ENCODE measurements at regions of chr2 and their contacts with region 1.

Region 1: GRCh38 chr2:204145263-204145751 is 208.7 kb downstream of the ICOS start:
- DNase-seq: peak; percentile 50 to 82 (median 76)
- ATAC-seq: peak; percentile 98
- H3K4me3 ChIP-seq: peak overlapping the region; percentile 61
- H3K4me3 Mint-ChIP-seq: peak overlapping the region; percentile 82 to 92 (median 86)
- H3K27ac ChIP-seq: peak overlapping the region; percentile 29
- H3K27ac Mint-ChIP-seq: peak overlapping the region; percentile 22 to 83 (median 56)
- H3K4me1 ChIP-seq: peaks cover 0 to 4% of the 10 kb centered on the region in 2 donors
- H3K4me1 Mint-ChIP-seq: peaks cover 3 to 11% (median 10%) of the 10 kb centered on the region in 7 donors
- H3K27me3 ChIP-seq: no peaks in the 10 kb centered on the region
- H3K27me3 Mint-ChIP-seq: peaks cover 0 to 43% (median 15%) of the 10 kb centered on the region in 5 donors

Region 2: DNA sequence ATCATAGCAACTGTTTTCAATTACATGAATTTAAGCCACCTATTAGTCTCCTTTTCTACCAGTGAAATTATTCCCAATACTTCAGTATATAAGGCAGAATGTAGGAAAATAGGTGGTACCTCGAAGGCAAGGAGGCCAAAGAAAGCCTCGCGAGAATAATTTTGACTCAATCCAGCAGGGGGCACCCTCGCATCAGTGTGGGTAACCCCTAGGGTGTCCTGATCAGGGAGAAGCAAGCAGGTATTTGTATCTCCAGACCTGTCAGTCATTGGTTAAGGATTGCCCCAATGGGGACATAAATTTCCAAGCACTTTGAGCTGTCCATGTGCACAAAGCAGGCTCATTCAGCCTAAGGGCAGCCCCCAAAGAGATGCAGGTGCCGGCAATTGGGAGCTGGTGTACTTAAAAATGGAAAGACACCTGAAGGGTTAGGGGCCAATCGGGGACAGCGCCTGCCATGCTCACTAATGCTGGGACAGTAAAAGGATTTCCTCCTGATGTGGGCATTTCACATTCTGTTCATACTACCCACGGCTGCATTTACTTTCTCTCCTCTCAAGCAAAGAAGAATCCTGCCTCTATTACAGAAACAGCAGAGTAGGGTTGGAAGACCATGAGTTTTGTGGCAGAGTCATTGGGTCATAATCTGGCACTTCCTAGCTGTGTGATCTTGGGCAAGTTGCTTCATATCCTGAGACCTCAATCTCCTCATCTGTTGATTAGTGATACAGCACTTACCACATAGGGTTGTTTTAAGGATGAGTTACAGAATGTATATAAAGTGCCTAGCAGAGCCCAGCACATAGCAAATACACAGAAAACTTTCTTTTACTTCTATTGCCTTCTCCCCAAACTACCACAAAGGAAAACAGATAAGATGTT is 72.6 kb before region 1 on chr2:
- CTCF ChIA-PET with region 1: no interaction called
- POLR2A ChIA-PET with region 1: no interaction called
- intact Hi-C with region 1: loop called in 1 of 2 experiments (anchors 2 kb)
- DNase-seq: peak; percentile 9 to 75 (median 44)
- ATAC-seq: peak; percentile 71
- H3K4me3 ChIP-seq: no peak overlapping the region
- H3K4me3 Mint-ChIP-seq: no peak overlapping the region
- H3K27ac ChIP-seq: no peak overlapping the region
- H3K27ac Mint-ChIP-seq: no peak overlapping the region
- H3K4me1 ChIP-seq: no peaks in the 10 kb centered on the region
- H3K4me1 Mint-ChIP-seq: peaks cover 0 to 8% (median 0%) of the 10 kb centered on the region in 7 donors
- H3K27me3 ChIP-seq: no peaks in the 10 kb centered on the region
- H3K27me3 Mint-ChIP-seq: peaks cover 0 to 18% (median 0%) of the 10 kb centered on the region in 5 donors

Region 3: DNA sequence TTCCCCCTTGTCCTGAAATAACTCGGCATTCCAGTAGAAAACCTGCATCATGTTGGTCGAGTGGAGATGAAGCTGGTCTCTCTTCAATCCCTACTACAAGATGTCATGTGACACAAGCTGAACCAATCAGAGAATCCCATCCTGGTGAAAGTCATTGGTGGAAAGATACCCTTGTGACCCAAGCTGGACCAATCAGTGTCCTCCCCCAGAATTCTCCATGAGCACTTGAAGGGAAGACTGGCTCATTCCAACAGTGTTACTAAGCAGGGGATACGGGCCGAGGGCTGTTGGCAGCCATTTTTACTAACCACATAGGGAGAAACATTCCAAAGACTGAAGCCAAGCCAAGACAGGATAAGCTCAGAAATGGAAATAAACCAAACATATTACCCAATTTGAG is 89.6 kb after region 1 on chr2:
- CTCF ChIA-PET with region 1: no interaction called
- POLR2A ChIA-PET with region 1: no interaction called
- intact Hi-C with region 1: loop called in 1 of 2 experiments (anchors 5 kb)
- DNase-seq: no peak
- ATAC-seq: no peak
- H3K4me3 ChIP-seq: no peak overlapping the region
- H3K4me3 Mint-ChIP-seq: no peak overlapping the region
- H3K27ac ChIP-seq: no peak overlapping the region
- H3K27ac Mint-ChIP-seq: no peak overlapping the region
- H3K4me1 ChIP-seq: no peaks in the 10 kb centered on the region
- H3K4me1 Mint-ChIP-seq: no peaks in the 10 kb centered on the region
- H3K27me3 ChIP-seq: peaks cover 0 to 3% of the 10 kb centered on the region in 2 donors
- H3K27me3 Mint-ChIP-seq: peaks cover 0 to 22% (median 5%) of the 10 kb centered on the region in 5 donors

Region 4: GRCh38 chr2:204251158-204251997 is 106.1 kb after region 1 on chr2:
- CTCF ChIA-PET with region 1: no interaction called
- POLR2A ChIA-PET with region 1: no interaction called
- intact Hi-C with region 1: no loop called
- DNase-seq: no peak
- ATAC-seq: no peak
- H3K4me3 ChIP-seq: no peak overlapping the region
- H3K4me3 Mint-ChIP-seq: no peak overlapping the region
- H3K27ac ChIP-seq: no peak overlapping the region
- H3K27ac Mint-ChIP-seq: no peak overlapping the region
- H3K4me1 ChIP-seq: no peaks in the 10 kb centered on the region
- H3K4me1 Mint-ChIP-seq: peaks cover 0 to 2% (median 0%) of the 10 kb centered on the region in 7 donors
- H3K27me3 ChIP-seq: no peaks in the 10 kb centered on the region
- H3K27me3 Mint-ChIP-seq: peaks cover 0 to 21% (median 13%) of the 10 kb centered on the region in 5 donors

Region 5: GRCh38 chr2:204691911-204692510 is 546.7 kb after region 1 on chr2:
- CTCF ChIA-PET with region 1: no interaction called
- POLR2A ChIA-PET with region 1: no interaction called
- intact Hi-C with region 1: loop called in 1 of 2 experiments (anchors 1 kb)
- DNase-seq: peak in 6 of 9 donors; percentile 4 to 42 (median 26)
- ATAC-seq: peak; percentile 55
- H3K4me3 ChIP-seq: no peak overlapping the region
- H3K4me3 Mint-ChIP-seq: no peak overlapping the region
- H3K27ac ChIP-seq: no peak overlapping the region
- H3K27ac Mint-ChIP-seq: no peak overlapping the region
- H3K4me1 ChIP-seq: peaks cover 0 to 6% of the 10 kb centered on the region in 2 donors
- H3K4me1 Mint-ChIP-seq: peaks cover 0 to 15% (median 9%) of the 10 kb centered on the region in 7 donors
- H3K27me3 ChIP-seq: no peaks in the 10 kb centered on the region
- H3K27me3 Mint-ChIP-seq: peaks cover 0 to 13% (median 0%) of the 10 kb centered on the region in 5 donors

Region 6: GRCh38 chr2:205947621-205948495 is 1802.6 kb after region 1 on chr2:
- CTCF ChIA-PET with region 1: no interaction called
- POLR2A ChIA-PET with region 1: no interaction called
- intact Hi-C with region 1: loop called in 1 of 2 experiments (anchors 1 kb)
- DNase-seq: peak in 8 of 9 donors; percentile 12 to 53 (median 28)
- ATAC-seq: peak; percentile 71
- H3K4me3 ChIP-seq: no peak overlapping the region
- H3K4me3 Mint-ChIP-seq: peak overlapping the region in 1 of 10 donors; percentile 13
- H3K27ac ChIP-seq: no peak overlapping the region
- H3K27ac Mint-ChIP-seq: no peak overlapping the region
- H3K4me1 ChIP-seq: no peaks in the 10 kb centered on the region
- H3K4me1 Mint-ChIP-seq: peaks cover 0 to 4% (median 3%) of the 10 kb centered on the region in 7 donors
- H3K27me3 ChIP-seq: no peaks in the 10 kb centered on the region
- H3K27me3 Mint-ChIP-seq: peaks cover 0 to 25% (median 9%) of the 10 kb centered on the region in 5 donors